ENCODE measurements at regions of chr10 and their contacts with region 1.

Region 1: GRCh38 chr10:97334370-97335175 is at the start of gene FRAT2:
- DNase-seq: peak; percentile 89
- ATAC-seq: peak; percentile 89
- H3K4me3 Mint-ChIP-seq: peak within 1 kb of the TSS; percentile 75
- H3K27ac Mint-ChIP-seq: peak within 1 kb of the TSS; percentile 93
- H3K4me1 Mint-ChIP-seq: peaks cover 32% of the 10 kb centered on the region
- H3K27me3 Mint-ChIP-seq: peaks cover 28% of the 10 kb centered on the region
- total RNA-seq, gene FRAT2: 10.0 to 10.4 TPM

Region 2: GRCh38 chr10:97318772-97319651 is 15.6 kb before region 1 on chr10 and contains the start of gene FRAT1:
- CTCF ChIA-PET with region 1: interaction called, 24 read pairs
- POLR2A ChIA-PET with region 1: interaction called, 46 read pairs
- DNase-seq: peak; percentile 91
- ATAC-seq: peak; percentile 77
- H3K4me3 Mint-ChIP-seq: peak within 1 kb of the TSS; percentile 82
- H3K27ac Mint-ChIP-seq: peak within 1 kb of the TSS; percentile 99
- H3K4me1 Mint-ChIP-seq: peaks cover 26% of the 10 kb centered on the region
- H3K27me3 Mint-ChIP-seq: peaks cover 3% of the 10 kb centered on the region
- total RNA-seq, gene FRAT1: 4.2 to 4.4 TPM

Region 3: GRCh38 chr10:97543025-97543575 is 208.5 kb after region 1 on chr10:
- CTCF ChIA-PET with region 1: no interaction called
- POLR2A ChIA-PET with region 1: no interaction called
- DNase-seq: peak; percentile 46
- ATAC-seq: peak; percentile 65
- H3K4me3 Mint-ChIP-seq: no peak overlapping the region
- H3K27ac Mint-ChIP-seq: no peak overlapping the region
- H3K4me1 Mint-ChIP-seq: peaks cover 13% of the 10 kb centered on the region
- H3K27me3 Mint-ChIP-seq: no peaks in the 10 kb centered on the region